ENCODE measurements at regions of chr3 and their contacts with region 1.

Region 1: DNA sequence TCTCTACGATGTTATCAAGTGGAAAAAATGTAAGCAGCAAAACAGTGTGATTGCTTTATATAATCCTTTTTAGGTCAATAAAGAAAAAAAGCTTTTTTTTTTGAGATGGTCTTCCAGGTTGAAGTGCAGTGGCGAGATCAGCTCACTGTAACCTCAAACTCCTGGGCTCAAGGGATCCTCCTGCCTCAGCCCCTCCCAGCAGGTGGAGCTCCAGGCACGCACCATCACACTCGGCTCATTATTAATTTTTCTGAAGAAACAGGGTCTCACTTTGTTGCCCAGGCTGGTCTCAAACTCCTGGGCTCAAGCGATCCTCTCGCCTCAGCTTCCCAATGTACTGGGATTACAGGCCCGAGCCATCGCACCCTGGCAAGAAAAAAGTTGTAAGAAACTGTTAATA is 17.3 kb downstream of the RNF168 start:
- DNase-seq: peak; percentile 50
- ATAC-seq: no peak
- H3K4me3 Mint-ChIP-seq: no peak overlapping the region
- H3K27ac Mint-ChIP-seq: no peak overlapping the region
- H3K4me1 Mint-ChIP-seq: peaks cover 4% of the 10 kb centered on the region
- H3K27me3 Mint-ChIP-seq: no peaks in the 10 kb centered on the region

Region 2: DNA sequence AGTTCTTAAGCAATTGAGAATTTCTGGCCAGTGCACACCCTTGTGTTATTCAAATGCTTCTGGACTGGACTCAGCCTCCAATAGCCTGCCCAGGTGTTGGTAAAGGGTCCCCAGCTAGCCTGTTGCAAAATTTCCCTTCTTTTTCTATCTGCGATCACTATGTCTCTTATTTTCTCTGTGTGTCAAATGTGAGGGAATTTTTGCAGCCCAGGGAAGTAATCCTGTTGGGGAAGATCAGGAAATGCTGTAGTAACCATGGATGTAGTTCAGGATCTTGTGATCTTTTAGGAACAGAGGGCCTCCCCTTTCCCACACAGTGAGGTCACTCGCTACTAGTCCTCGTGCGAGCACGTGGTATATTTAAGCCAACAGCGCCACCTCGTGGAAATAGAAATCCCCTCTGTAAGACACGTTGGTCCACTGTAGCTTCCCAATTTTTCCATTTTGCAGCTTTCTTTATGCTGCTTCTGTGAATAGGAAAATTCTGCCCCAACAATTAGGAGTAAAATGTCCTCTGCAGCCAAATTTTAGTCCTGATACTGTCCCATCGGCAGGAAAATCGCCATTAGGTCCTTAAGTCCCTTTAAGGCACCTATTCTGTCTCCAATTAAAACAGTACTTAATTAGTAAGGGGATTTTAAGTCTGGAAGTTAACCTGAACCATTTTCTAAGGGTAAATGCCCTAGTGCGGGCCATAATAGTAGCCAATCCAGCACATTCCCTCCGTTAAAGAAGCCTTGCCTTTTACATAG is 32.9 kb after region 1 on chr3:
- CTCF ChIA-PET with region 1: interaction called, 42 read pairs
- POLR2A ChIA-PET with region 1: no interaction called
- intact Hi-C with region 1: loop called (anchors 1 kb)
- DNase-seq: peak; percentile 84
- ATAC-seq: peak; percentile 73
- H3K4me3 Mint-ChIP-seq: no peak overlapping the region
- H3K27ac Mint-ChIP-seq: no peak overlapping the region
- H3K4me1 Mint-ChIP-seq: no peaks in the 10 kb centered on the region
- H3K27me3 Mint-ChIP-seq: peaks cover 2% of the 10 kb centered on the region

Region 3: GRCh38 chr3:196528639-196529233 is 42.5 kb after region 1 on chr3:
- CTCF ChIA-PET with region 1: interaction called, 42 read pairs
- POLR2A ChIA-PET with region 1: no interaction called
- intact Hi-C with region 1: no loop called
- DNase-seq: peak; percentile 93
- ATAC-seq: peak; percentile 94
- H3K4me3 Mint-ChIP-seq: peak overlapping the region; percentile 74
- H3K27ac Mint-ChIP-seq: peak overlapping the region; percentile 72
- H3K4me1 Mint-ChIP-seq: peaks cover 8% of the 10 kb centered on the region
- H3K27me3 Mint-ChIP-seq: peaks cover 2% of the 10 kb centered on the region